Activated CD4-positive, alpha-beta T cell treated with anti-CD3 and anti-CD28 coated beads for 36 hours (primary cell): ENCODE measurements at regions of chr1 and their contacts with region 1.

Region 1: DNA sequence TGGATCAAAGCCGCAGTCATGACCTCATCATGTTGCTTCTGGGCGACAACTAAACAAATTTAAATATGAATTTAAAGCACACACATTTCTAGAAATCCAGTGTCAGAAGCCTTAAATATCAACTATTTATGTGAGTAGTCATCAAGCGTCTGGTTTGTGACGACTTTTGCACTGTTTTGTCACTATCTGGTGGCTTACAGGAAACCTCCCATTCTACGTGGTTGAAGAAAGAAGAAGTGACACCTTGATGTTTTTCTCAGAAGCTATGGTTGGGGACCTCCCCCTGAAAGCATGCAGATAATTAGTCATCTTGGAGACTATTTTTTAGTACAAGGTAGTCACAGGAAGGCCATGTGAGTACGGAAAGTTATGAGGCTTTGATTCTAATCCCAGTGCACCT is 58.5 kb downstream of the TENT5C start:
- DNase-seq: peak; percentile 76
- ATAC-seq: peak; percentile 85
- H3K4me3 Mint-ChIP-seq: no peak overlapping the region
- H3K27ac Mint-ChIP-seq: peak overlapping the region; percentile 84
- H3K4me1 Mint-ChIP-seq: peaks cover 66% of the 10 kb centered on the region
- H3K27me3 Mint-ChIP-seq: peaks cover 5% of the 10 kb centered on the region

Region 2: GRCh38 chr1:116769561-116769977 is 894.7 kb before region 1 on chr1:
- CTCF ChIA-PET with region 1: no interaction called
- POLR2A ChIA-PET with region 1: interaction called, 4 read pairs
- intact Hi-C with region 1: loop called in 1 of 2 experiments (anchors 5 kb)
- DNase-seq: peak; percentile 86
- ATAC-seq: peak; percentile 53
- H3K4me3 Mint-ChIP-seq: peak overlapping the region; percentile 93
- H3K27ac Mint-ChIP-seq: peak overlapping the region; percentile 100
- H3K4me1 Mint-ChIP-seq: peaks cover 96% of the 10 kb centered on the region
- H3K27me3 Mint-ChIP-seq: no peaks in the 10 kb centered on the region

Region 3: GRCh38 chr1:117077267-117077666 is 587.0 kb before region 1 on chr1:
- CTCF ChIA-PET with region 1: no interaction called
- POLR2A ChIA-PET with region 1: no interaction called
- intact Hi-C with region 1: loop called in 1 of 2 experiments (anchors 5 kb)
- DNase-seq: peak; percentile 78
- ATAC-seq: peak; percentile 99
- H3K4me3 Mint-ChIP-seq: no peak overlapping the region
- H3K27ac Mint-ChIP-seq: peak overlapping the region; percentile 86
- H3K4me1 Mint-ChIP-seq: peaks cover 40% of the 10 kb centered on the region
- H3K27me3 Mint-ChIP-seq: no peaks in the 10 kb centered on the region

Region 4: DNA sequence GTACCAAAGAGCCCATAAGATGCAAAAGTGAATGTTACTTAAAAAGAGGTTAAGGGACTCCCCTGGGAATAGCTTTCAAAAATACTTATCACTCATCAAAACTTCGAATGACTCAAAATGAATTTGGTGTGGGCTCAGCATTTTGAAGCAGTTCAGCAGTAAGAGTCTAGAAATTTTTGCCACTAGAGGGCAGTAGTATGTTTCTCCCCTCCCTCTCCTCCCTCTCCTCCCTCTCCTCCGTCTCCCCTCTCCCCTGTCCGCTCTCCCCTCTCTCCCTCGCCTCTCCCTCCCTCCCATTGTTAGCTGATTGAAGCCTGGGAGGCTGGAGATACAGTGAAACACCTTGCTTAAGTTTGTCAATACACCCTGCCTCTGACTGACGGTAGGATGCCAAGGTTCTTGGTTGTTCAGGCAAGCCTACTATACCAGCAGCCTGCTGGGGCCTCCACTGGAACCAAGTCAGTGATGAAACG is 129.3 kb before region 1 on chr1:
- CTCF ChIA-PET with region 1: interaction called, 14 read pairs
- POLR2A ChIA-PET with region 1: interaction called, 4 read pairs
- intact Hi-C with region 1: loop called (anchors 1 kb)
- DNase-seq: peak; percentile 48
- ATAC-seq: peak; percentile 81
- H3K4me3 Mint-ChIP-seq: no peak overlapping the region
- H3K27ac Mint-ChIP-seq: no peak overlapping the region
- H3K4me1 Mint-ChIP-seq: peaks cover 25% of the 10 kb centered on the region
- H3K27me3 Mint-ChIP-seq: peaks cover 2% of the 10 kb centered on the region

Region 5: DNA sequence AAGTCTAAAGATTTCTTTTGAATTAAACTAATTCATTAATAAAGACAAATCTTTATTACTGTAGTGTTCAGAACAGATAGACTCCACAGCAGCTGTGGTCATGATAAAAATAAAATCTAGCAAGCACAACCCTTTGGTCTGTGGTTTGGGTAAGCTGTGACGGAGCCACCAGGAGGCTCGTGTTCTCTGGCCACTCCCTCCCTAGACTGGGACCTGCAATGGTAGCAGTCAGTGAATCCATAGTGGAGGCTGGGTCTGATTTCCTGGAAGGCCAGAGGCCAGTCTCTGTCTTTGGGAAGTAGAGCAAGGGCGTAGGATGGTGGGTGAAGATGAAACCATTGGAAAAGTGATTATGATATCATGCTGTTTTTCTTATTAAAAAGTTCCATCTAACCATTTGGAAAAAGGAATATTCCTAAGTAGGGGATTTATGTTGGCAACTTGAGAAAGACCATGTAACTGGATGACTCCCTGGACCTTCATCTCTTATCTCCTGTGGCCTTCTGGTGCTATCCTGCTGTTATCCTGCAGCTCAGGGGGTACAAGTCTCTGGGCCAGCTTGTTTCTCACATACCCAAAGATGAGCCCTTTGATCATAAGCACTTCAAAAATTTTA is 19.5 kb before region 1 on chr1:
- CTCF ChIA-PET with region 1: interaction called, 4 read pairs
- POLR2A ChIA-PET with region 1: no interaction called
- intact Hi-C with region 1: loop called in 1 of 2 experiments (anchors 2 kb)
- DNase-seq: no peak
- ATAC-seq: no peak
- H3K4me3 Mint-ChIP-seq: no peak overlapping the region
- H3K27ac Mint-ChIP-seq: no peak overlapping the region
- H3K4me1 Mint-ChIP-seq: peaks cover 10% of the 10 kb centered on the region
- H3K27me3 Mint-ChIP-seq: peaks cover 30% of the 10 kb centered on the region

Region 6: GRCh38 chr1:119140177-119141019 is 1476.1 kb after region 1 on chr1 and contains the start of gene WARS2:
- CTCF ChIA-PET with region 1: no interaction called
- POLR2A ChIA-PET with region 1: no interaction called
- intact Hi-C with region 1: loop called in 1 of 2 experiments (anchors 5 kb)
- DNase-seq: peak; percentile 94
- ATAC-seq: peak; percentile 95
- H3K4me3 Mint-ChIP-seq: no peak within 1 kb of the TSS
- H3K27ac Mint-ChIP-seq: no peak within 1 kb of the TSS
- H3K4me1 Mint-ChIP-seq: peaks cover 13% of the 10 kb centered on the region
- H3K27me3 Mint-ChIP-seq: no peaks in the 10 kb centered on the region
- total RNA-seq, gene WARS2: 16.0 to 25.2 TPM